Activated B cell treated with CpG ODN at 0.5 μM for 24 hours (primary cell): ENCODE measurements at regions of chr12 and their contacts with region 1.

Region 1: DNA sequence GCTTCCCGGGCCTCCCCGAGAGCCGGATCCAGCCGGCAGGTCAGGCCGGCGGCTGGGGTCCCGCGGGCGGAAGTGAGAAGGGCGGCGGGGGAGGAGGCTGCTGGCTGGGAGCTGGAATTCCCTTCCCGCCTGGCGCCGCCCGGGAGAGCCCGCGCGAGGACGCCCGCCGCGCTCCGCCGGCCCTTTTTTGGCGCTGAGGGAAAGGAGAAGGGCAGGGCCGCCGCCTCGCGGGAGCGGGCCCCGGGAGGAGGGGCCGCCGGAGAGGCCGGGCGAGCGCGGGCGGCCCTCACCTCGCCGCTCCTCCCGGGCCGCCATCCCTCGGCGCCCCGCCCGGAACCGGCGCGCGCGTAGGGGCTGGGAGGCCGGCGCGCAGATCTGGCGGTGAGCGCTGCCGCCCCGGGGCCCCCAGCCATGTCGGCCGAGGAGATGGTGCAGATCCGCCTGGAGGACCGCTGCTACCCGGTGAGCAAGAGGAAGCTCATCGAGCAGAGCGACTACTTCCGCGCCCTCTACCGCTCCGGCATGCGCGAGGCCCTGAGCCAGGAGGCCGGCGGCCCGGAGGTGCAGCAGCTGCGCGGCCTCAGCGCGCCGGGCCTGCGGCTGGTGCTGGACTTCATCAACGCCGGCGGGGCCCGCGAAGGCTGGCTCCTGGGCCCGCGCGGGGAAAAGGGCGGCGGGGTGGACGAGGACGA is at the starts of genes KLHL42 and MANSC4:
- DNase-seq: peak; percentile 67
- ATAC-seq: peak; percentile 84
- H3K4me3 Mint-ChIP-seq: peak within 1 kb of the TSS; percentile 89
- H3K27ac Mint-ChIP-seq: peak within 1 kb of the TSS; percentile 87
- H3K4me1 Mint-ChIP-seq: peaks cover 28% of the 10 kb centered on the region
- H3K27me3 Mint-ChIP-seq: no peaks in the 10 kb centered on the region
- CTCF ChIP-seq: no peak
- total RNA-seq, gene KLHL42: 15.9 and 19.3 TPM in 2 replicates
- total RNA-seq, gene MANSC4: not detected in 2 replicates

Region 2: GRCh38 chr12:27523642-27524493 is 256.2 kb before region 1 on chr12 and contains the start of gene PPFIBP1:
- CTCF ChIA-PET with region 1: no interaction called
- POLR2A ChIA-PET with region 1: no interaction called
- intact Hi-C with region 1: loop called (anchors 5 kb)
- DNase-seq: peak; percentile 81
- ATAC-seq: peak; percentile 98
- H3K4me3 Mint-ChIP-seq: peak within 1 kb of the TSS; percentile 96
- H3K27ac Mint-ChIP-seq: peak within 1 kb of the TSS; percentile 93
- H3K4me1 Mint-ChIP-seq: peaks cover 23% of the 10 kb centered on the region
- H3K27me3 Mint-ChIP-seq: peaks cover 3% of the 10 kb centered on the region
- CTCF ChIP-seq: no peak
- total RNA-seq, gene PPFIBP1: 7.2 and 8.1 TPM in 2 replicates

Region 3: DNA sequence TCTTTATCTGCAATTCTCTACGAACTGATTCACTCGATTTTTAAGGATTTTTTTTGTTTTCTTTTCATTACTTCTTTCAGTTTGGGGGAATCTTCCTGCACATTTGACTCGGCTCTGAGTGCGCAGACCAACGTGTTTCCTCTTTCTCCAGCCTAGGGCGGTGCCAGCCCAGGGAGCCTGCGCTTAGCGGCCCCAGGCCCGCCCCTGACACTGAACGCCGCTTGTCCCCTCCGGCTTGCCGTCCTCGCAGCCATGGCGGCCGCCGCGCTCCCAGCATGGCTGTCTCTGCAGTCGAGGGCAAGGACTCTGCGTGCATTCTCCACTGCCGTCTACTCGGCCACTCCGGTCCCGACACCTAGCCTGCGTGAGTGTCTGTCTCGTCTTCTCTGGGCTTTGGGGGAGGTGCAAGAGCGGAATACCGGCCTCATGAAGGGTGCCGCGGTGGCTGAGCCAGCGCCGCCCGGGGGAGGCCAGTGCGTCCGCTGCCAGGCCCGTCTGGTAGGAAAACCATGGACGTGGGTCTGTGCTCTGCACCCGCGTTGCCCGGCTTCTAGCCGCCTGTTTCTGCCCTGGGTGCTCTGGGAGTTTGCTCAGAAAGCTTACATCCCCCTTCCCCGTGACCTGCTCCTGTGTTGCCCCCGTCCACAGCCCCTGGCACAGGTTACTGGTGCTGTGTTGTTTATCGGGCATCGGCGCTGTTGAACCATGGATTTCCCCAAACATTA is 69.3 kb before region 1 on chr12 and contains the start of gene MRPS35:
- CTCF ChIA-PET with region 1: no interaction called
- POLR2A ChIA-PET with region 1: interaction called, 26 read pairs
- intact Hi-C with region 1: loop called (anchors 1 kb)
- DNase-seq: peak; percentile 92
- ATAC-seq: peak; percentile 99
- H3K4me3 Mint-ChIP-seq: peak within 1 kb of the TSS; percentile 99
- H3K27ac Mint-ChIP-seq: peak within 1 kb of the TSS; percentile 99
- H3K4me1 Mint-ChIP-seq: peaks cover 29% of the 10 kb centered on the region
- H3K27me3 Mint-ChIP-seq: no peaks in the 10 kb centered on the region
- CTCF ChIP-seq: no peak
- total RNA-seq, gene MRPS35: 36.2 and 36.8 TPM in 2 replicates

Region 4: GRCh38 chr12:27733052-27733656 is 46.9 kb before region 1 on chr12:
- CTCF ChIA-PET with region 1: interaction called, 5 read pairs
- POLR2A ChIA-PET with region 1: no interaction called
- intact Hi-C with region 1: loop called (anchors 5 kb)
- DNase-seq: no peak
- ATAC-seq: peak; percentile 61
- H3K4me3 Mint-ChIP-seq: no peak overlapping the region
- H3K27ac Mint-ChIP-seq: no peak overlapping the region
- H3K4me1 Mint-ChIP-seq: no peaks in the 10 kb centered on the region
- H3K27me3 Mint-ChIP-seq: no peaks in the 10 kb centered on the region
- CTCF ChIP-seq: no peak

Region 5: GRCh38 chr12:27821259-27821973 is 41.4 kb after region 1 on chr12:
- CTCF ChIA-PET with region 1: interaction called, 3 read pairs
- POLR2A ChIA-PET with region 1: interaction called, 4 read pairs
- intact Hi-C with region 1: loop called (anchors 2 kb)
- DNase-seq: peak; percentile 24
- ATAC-seq: peak; percentile 25
- H3K4me3 Mint-ChIP-seq: peak overlapping the region; percentile 66
- H3K27ac Mint-ChIP-seq: peak overlapping the region; percentile 73
- H3K4me1 Mint-ChIP-seq: peaks cover 38% of the 10 kb centered on the region
- H3K27me3 Mint-ChIP-seq: peaks cover 2% of the 10 kb centered on the region
- CTCF ChIP-seq: peak; percentile 43

Region 6: DNA sequence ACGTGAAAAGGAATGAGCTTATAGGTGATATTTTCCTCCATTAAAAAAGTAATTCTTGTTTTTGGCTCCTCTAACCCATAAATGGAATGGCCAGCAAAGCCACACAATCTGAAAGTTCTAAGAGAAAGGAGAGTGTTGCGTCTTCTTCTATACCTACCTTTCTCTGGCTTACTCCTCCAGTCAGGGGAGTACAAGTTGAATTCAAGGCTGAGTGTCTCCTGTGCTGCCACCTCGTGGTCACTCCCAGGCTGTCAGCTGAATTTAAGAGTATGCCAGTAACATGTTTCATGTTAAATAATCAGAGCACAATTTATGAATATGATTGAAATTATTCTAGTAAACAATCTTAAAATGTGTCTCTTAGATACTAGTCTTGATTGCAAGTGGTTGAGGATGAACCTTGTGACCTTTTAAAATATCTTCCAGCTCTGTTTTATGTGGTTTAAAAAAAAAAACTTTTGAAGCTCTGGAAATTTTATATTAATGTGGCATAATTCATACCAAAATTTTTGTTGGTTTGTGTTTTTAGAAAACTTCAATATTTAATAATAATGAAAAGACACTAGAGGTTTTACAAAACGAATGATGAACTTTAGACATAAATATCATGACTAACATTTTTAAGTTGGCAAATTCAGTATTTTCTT is 160.8 kb after region 1 on chr12:
- CTCF ChIA-PET with region 1: no interaction called
- POLR2A ChIA-PET with region 1: no interaction called
- intact Hi-C with region 1: loop called (anchors 1 kb)
- DNase-seq: peak; percentile 40
- ATAC-seq: peak; percentile 58
- H3K4me3 Mint-ChIP-seq: no peak overlapping the region
- H3K27ac Mint-ChIP-seq: no peak overlapping the region
- H3K4me1 Mint-ChIP-seq: no peaks in the 10 kb centered on the region
- H3K27me3 Mint-ChIP-seq: peaks cover 6% of the 10 kb centered on the region
- CTCF ChIP-seq: peak; percentile 16

Region 7: GRCh38 chr12:29380536-29381523 is 1600.8 kb after region 1 on chr12 and contains the start of gene ERGIC2:
- CTCF ChIA-PET with region 1: no interaction called
- POLR2A ChIA-PET with region 1: interaction called, 6 read pairs
- intact Hi-C with region 1: loop called (anchors 5 kb)
- DNase-seq: peak; percentile 73
- ATAC-seq: peak; percentile 94
- H3K4me3 Mint-ChIP-seq: peak within 1 kb of the TSS; percentile 94
- H3K27ac Mint-ChIP-seq: peak within 1 kb of the TSS; percentile 94
- H3K4me1 Mint-ChIP-seq: peaks cover 42% of the 10 kb centered on the region
- H3K27me3 Mint-ChIP-seq: no peaks in the 10 kb centered on the region
- CTCF ChIP-seq: no peak
- total RNA-seq, gene ERGIC2: 43.7 TPM in 2 replicates